WTC11 (cell line): ENCODE measurements at regions of chr17 and their contacts with region 1.

Region 1: GRCh38 chr17:43530278-43531081 is 15.7 kb downstream of the ETV4 start:
- DNase-seq: peak; percentile 99
- ATAC-seq: peak; percentile 91
- H3K4me3 Mint-ChIP-seq: peak overlapping the region; percentile 58
- H3K27ac Mint-ChIP-seq: peak overlapping the region; percentile 98
- H3K4me1 Mint-ChIP-seq: peaks cover 78% of the 10 kb centered on the region
- H3K27me3 Mint-ChIP-seq: no peaks in the 10 kb centered on the region
- CTCF ChIP-seq: no peak

Region 2: DNA sequence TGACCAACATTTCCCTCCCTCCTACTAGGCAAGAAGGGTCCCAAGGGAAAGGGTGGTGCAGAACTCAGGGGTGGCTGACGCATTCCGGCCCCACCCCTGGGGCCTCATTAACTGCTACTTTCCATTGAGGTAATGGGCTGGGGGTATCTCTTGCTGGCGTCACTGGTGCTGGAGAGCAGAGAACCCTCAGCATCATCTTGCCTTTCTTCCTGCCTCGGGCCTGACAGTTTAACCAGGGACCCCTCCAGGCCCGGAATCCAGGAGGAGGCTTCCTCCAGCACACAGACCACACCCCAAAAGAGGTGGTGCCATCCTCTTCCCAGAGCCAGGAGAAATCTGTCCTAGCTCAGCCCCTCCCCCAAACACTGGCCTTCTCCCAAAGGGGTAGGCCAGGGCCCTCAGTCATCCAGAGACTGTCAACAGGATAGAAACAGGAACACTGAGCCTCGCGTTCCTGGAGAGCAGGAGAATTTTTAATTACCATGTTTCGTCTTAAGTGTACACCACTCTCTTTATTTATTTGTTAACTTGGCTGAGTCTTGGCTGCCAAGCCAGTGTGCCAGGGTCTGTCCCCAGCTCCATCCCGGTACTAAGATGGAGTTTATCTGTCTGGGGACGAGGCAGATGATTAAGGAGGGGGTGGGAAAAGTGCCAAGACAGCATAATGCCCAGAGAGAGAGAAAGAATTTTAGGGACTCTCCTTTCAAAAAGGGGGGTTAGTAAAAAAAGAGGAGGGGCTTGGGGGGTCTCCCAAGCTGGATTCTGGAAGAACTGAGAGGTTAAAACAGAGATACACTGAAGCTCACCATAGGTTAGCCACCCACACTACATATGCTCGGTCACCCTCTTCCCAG is 10.6 kb after region 1 on chr17:
- CTCF ChIA-PET with region 1: interaction called, 12 read pairs
- POLR2A ChIA-PET with region 1: interaction called, 20 read pairs
- DNase-seq: peak; percentile 76
- ATAC-seq: peak; percentile 61
- H3K4me3 Mint-ChIP-seq: peak overlapping the region; percentile 47
- H3K27ac Mint-ChIP-seq: peak overlapping the region; percentile 92
- H3K4me1 Mint-ChIP-seq: peaks cover 70% of the 10 kb centered on the region
- H3K27me3 Mint-ChIP-seq: no peaks in the 10 kb centered on the region
- CTCF ChIP-seq: no peak

Region 3: GRCh38 chr17:43546319-43547188 is 16.1 kb after region 1 on chr17 and contains the start of gene ETV4:
- CTCF ChIA-PET with region 1: interaction called, 12 read pairs
- POLR2A ChIA-PET with region 1: interaction called, 20 read pairs
- DNase-seq: peak; percentile 98
- ATAC-seq: peak; percentile 63
- H3K4me3 Mint-ChIP-seq: peak within 1 kb of the TSS; percentile 89
- H3K27ac Mint-ChIP-seq: peak within 1 kb of the TSS; percentile 94
- H3K4me1 Mint-ChIP-seq: peaks cover 64% of the 10 kb centered on the region
- H3K27me3 Mint-ChIP-seq: no peaks in the 10 kb centered on the region; the same call in 1 of the 2 replicates
- CTCF ChIP-seq: no peak
- total RNA-seq, gene ETV4: 147 to 195 TPM (median 147 TPM) in 3 replicates